Mammary epithelial cell (primary cell): ENCODE measurements at regions of chr2 and their contacts with region 1.

Region 1: DNA sequence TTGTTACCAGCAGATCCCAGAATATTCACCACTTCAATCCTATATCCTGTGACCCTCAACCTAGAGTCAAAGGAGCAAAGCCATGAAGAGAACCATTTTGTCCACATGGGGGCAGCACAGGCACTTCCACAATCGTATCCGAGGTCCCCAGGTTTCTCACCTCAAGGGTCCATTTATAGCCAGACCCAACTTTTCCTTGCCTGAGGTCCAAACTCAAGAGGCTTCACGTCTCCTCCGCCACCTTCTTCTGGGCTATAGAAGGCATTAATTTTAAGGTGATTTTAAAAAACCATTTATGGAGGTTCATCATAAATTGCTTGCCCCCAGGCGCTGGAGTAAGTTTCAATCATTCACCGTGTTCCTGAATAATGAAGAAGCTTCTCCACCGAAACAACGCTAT is 111.6 kb upstream of the NABP1 start:
- DNase-seq: peak; percentile 38
- H3K4me3 ChIP-seq: no peak overlapping the region
- H3K27ac ChIP-seq: no peak overlapping the region
- H3K4me1 ChIP-seq: no peaks in the 10 kb centered on the region
- H3K27me3 ChIP-seq: no peaks in the 10 kb centered on the region
- CTCF ChIP-seq: peak; percentile 80 to 90

Region 2: GRCh38 chr2:191611614-191612013 is 45.3 kb after region 1 on chr2:
- CTCF ChIA-PET with region 1: no interaction called
- dilution Hi-C with region 1: no loop called
- in situ Hi-C with region 1: no loop called
- intact Hi-C with region 1: loop called (anchors 2 kb)
- DNase-seq: no peak
- H3K4me3 ChIP-seq: no peak overlapping the region
- H3K27ac ChIP-seq: peak overlapping the region; percentile 86
- H3K4me1 ChIP-seq: peaks cover 8% of the 10 kb centered on the region
- H3K27me3 ChIP-seq: no peaks in the 10 kb centered on the region
- CTCF ChIP-seq: no peak

Region 3: GRCh38 chr2:191691016-191691735 is 124.8 kb after region 1 on chr2:
- CTCF ChIA-PET with region 1: no interaction called
- dilution Hi-C with region 1: no loop called
- in situ Hi-C with region 1: loop called (anchors 5 kb)
- intact Hi-C with region 1: loop called (anchors 1 kb)
- DNase-seq: peak; percentile 63
- H3K4me3 ChIP-seq: no peak overlapping the region
- H3K27ac ChIP-seq: no peak overlapping the region
- H3K4me1 ChIP-seq: peaks cover 40% of the 10 kb centered on the region
- H3K27me3 ChIP-seq: no peaks in the 10 kb centered on the region
- CTCF ChIP-seq: peak; percentile 81 to 85

Region 4: GRCh38 chr2:191869178-191869577 is 302.8 kb after region 1 on chr2:
- CTCF ChIA-PET with region 1: interaction called, 4 read pairs
- dilution Hi-C with region 1: no loop called
- in situ Hi-C with region 1: no loop called
- intact Hi-C with region 1: loop called (anchors 1 kb)
- DNase-seq: no peak
- H3K4me3 ChIP-seq: no peak overlapping the region
- H3K27ac ChIP-seq: no peak overlapping the region
- H3K4me1 ChIP-seq: peaks cover 37% of the 10 kb centered on the region
- H3K27me3 ChIP-seq: no peaks in the 10 kb centered on the region
- CTCF ChIP-seq: peak; percentile 15 to 44